Caki2 (cell line): ENCODE measurements at regions of chr22 and their contacts with region 1.

Region 1: DNA sequence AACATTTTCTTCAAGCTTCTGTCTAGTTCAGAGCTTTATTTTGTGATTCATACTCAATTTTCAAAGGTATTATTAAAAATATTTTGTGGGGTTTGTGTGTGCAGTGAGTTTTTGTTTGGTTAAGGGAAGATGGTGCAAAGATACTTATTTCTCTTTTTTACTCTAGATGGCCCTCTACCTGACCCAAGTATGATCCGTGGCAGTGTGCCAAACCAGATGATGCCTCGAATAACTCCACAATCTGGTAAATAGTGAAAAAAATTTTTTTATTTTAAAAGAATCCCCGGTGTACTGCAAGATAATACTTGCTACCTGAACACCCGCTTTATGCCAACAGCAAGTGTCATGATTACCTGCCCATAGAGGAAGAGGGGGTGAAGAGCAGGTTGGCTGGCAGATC is 54.2 kb downstream of the EP300 start:
- DNase-seq: no peak

Region 2: DNA sequence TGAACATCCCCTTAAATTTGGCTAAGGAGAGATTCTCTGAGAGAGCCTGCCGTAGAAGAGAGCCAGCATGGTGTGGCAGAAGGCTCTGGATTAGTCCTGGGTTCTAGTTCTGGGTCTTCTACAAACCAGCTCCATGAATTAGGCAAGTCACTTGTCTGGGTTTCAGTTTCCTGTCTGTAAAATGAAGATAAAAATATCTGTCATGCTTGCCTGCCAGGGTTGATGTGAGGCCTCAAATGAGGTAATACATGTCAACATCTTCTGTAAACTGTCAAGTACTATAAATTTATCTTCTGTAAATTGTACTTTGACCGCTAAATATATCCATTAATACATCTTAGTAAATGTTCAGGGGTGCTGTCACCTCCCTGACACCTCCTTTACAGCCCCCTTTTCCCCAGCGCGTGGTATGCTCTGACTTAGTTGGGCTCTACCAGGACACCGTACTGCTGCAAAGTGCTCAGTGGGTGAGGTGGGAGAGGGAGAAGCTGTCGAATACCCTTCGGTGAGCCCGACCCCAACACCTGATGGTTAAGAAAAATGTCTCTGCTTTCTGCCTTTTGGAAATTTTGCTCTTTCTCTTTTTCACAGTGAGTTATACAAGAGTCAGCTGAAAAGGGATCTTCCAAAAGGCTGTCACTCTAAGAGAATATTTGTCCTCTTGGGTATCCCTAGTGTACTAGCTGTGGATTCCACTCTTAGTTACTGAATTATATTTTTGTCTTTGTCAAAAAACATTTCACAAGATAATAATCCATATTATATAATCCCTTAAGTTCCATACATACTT is 180.4 kb before region 1 on chr22:
- in situ Hi-C with region 1: loop called (anchors 10 kb)
- DNase-seq: no peak

Region 3: DNA sequence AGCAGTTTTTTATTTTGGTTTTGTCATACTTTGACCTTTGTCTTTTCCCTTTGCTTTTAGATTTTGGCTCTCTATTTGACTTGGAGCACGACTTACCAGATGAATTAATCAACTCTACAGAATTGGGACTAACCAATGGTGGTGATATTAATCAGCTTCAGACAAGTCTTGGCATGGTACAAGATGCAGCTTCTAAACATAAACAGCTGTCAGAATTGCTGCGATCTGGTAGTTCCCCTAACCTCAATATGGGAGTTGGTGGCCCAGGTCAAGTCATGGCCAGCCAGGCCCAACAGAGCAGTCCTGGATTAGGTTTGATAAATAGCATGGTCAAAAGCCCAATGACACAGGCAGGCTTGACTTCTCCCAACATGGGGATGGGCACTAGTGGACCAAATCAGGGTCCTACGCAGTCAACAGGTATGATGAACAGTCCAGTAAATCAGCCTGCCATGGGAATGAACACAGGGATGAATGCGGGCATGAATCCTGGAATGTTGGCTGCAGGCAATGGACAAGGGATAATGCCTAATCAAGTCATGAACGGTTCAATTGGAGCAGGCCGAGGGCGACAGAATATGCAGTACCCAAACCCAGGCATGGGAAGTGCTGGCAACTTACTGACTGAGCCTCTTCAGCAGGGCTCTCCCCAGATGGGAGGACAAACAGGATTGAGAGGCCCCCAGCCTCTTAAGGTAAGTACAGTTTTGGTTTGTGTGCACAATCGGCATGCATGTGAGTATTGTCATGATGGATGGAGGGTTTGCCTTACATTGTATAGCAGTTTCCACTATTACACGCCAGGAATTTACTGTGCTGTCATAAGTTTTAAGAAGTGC is 29.2 kb before region 1 on chr22:
- in situ Hi-C with region 1: no loop called
- DNase-seq: no peak

Region 4: DNA sequence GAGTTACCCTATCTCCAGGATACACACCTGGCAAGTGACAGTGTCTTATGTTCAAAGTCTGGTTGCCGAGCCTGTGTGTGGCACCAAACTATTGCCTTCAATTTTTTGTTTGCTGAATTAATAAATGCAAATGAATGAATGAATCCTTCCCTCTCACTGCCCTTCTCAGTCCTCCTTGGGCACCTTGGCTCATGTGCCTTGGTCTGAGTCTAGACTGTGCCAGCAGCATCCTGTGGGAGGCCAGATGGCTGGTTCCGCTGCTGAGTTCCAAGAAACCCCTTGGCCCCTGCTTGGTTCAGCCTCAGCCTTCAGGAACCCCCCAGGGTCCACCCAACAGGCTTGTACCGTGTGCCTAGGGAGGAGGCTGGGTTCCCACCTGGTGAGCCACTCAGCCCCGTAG is 269.0 kb after region 1 on chr22:
- in situ Hi-C with region 1: no loop called
- DNase-seq: no peak

Region 5: GRCh38 chr22:41425660-41426365 is 279.2 kb after region 1 on chr22:
- in situ Hi-C with region 1: no loop called
- DNase-seq: no peak